ENCODE measurements at regions of chr18 and their contacts with region 1.

Region 1: DNA sequence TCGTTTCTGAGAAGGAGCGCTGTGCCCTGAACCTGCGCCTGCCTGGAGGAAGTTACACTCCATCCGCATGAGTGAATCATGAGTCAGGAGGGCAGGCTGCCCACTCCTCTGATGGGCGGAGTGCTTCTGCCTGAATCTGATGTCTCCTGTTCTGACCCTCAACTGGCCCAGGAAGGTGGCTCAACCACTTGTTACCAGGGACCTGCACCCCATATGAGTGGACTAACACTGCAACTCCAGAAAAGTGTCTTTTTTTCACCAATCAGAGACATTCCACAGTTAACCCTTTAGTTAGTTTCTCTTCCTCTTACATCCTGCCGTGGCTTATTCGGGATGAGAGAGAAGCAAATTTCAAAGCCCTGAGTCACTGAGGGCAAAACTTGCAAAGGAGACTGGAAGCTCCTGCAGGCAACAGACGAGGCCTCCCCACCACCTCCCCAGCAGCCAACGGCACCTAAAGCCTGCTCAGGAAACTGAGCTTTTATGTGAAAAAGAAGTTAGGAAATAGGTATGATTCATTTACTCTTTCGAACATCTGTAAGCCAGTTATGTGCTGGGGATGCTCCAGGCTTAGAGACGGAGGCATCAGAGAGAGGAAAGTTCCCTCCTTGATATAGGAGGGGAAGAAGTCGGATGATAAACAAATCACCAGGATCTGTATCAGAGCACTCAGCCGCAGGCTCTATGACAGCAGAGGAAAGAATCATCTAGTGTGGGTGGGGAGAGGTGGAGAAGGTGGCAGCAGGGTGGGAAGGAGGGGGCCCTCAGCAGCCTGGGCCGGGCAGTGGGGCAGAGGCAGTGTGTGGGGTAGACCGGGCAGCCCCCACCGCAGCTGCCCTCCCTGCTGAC is 30.9 kb downstream of the MBP start:
- DNase-seq: peak; percentile 85 to 99
- H3K4me3 ChIP-seq: peak overlapping the region; percentile 31; the same call in 1 of the 2 replicates
- H3K27ac ChIP-seq: peak overlapping the region; percentile 99
- H3K4me1 ChIP-seq: peaks cover 52% of the 10 kb centered on the region
- H3K27me3 ChIP-seq: no peaks in the 10 kb centered on the region
- CTCF ChIP-seq: no peak

Region 2: DNA sequence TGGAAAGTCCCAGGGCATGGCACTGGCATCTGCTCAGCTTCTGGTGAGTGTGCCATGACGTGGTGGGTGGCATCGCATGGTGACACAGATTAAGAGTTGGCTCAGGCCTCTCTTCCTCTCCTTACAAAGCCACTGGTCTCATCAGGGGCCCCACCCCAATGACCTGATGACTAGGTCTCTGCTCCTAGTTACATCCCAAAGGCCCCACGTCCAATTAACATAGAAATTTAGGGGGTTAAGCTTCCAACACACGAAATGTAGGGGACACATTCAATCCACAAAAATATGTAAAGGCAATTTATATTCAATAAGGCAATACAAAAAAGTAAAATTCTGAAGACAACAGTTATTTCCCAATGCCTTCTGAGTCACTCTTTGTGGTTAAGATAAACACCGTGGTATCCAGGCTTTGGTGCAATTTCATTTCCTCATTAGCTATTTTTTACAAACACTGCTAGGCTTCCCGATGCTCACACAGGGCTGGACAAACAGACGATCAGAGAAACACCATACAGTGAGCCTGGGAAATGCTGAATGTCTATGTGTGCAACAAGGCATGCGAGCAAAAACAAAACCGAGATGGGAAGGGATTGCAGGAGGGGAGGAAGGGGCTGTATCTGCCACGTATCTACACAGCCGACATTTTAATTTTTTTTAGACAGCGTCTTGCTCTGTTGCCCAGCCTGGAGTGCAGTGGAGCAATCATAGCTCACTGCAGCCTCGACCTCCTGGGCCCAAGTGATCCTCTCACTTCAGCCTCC is 36.2 kb before region 1 on chr18:
- CTCF ChIA-PET with region 1: no interaction called
- POLR2A ChIA-PET with region 1: no interaction called
- intact Hi-C with region 1: loop called (anchors 1 kb)
- DNase-seq: peak; percentile 54 to 97
- H3K4me3 ChIP-seq: no peak overlapping the region
- H3K27ac ChIP-seq: peak overlapping the region; percentile 97
- H3K4me1 ChIP-seq: peaks cover 84% of the 10 kb centered on the region
- H3K27me3 ChIP-seq: no peaks in the 10 kb centered on the region
- CTCF ChIP-seq: no peak

Region 3: GRCh38 chr18:77088963-77089722 is 12.5 kb before region 1 on chr18:
- CTCF ChIA-PET with region 1: no interaction called
- POLR2A ChIA-PET with region 1: no interaction called
- intact Hi-C with region 1: loop called (anchors 1 kb)
- DNase-seq: peak; percentile 96 to 99
- H3K4me3 ChIP-seq: peak overlapping the region; percentile 25; the same call in 1 of the 2 replicates
- H3K27ac ChIP-seq: peak overlapping the region; percentile 95
- H3K4me1 ChIP-seq: peaks cover 71% of the 10 kb centered on the region
- H3K27me3 ChIP-seq: no peaks in the 10 kb centered on the region
- CTCF ChIP-seq: no peak